B cell (primary cell): ENCODE measurements at regions of chr20 and their contacts with region 1.

Region 1: DNA sequence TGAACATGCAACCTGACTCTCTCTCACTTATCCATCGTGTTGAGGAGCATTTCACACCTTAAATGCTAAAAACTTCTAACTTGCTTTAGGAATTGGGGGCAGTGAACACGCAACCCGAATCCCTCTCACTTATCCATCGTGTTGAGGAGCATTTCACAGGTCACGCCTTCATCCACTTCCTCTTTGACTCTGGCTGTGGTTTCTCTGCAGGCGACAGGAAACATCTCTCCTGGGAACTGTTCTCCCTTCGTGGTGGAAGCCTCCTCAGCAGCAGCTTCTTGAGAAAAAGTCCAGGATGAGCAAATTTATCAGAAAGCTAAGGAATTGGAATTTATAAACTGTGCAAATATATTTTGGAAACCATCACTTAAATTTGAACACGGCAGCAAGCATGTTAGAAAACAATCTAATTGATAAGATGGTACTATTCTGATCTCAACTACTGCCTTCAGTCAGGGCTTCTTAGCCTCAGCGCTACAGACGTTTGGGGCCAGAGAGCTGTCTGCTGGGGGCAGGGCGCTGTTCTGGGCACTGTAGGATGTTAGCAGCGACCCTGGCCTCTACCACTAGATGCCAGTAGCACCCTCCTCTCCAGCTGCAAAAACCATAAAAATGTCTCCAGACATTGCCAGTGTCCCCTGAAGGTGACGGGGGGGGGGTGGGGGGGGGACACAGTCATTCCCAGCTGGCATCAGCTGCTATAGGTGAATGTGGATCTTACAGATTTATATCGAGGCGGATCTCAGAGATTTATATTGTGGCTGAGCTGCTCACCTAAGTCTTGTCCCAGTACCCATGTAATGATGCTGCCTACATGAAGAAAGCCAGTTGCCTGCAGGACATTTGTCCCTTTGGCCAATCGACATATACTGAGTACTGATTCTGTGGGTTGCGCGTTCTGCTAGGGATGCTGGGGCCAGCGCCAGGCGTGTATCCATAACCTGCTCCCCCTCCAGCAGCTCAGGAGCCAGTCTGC is 26.2 kb downstream of the CTCFL start:
- DNase-seq: peak; percentile 67
- ATAC-seq: peak; percentile 70
- H3K4me3 ChIP-seq: no peak overlapping the region
- H3K4me3 Mint-ChIP-seq: no peak overlapping the region
- H3K27ac ChIP-seq: no peak overlapping the region
- H3K27ac Mint-ChIP-seq: no peak overlapping the region
- H3K4me1 ChIP-seq: peaks cover 30 to 39% of the 10 kb centered on the region in 2 donors
- H3K4me1 Mint-ChIP-seq: peaks cover 44% of the 10 kb centered on the region
- H3K27me3 ChIP-seq: peaks cover 0 to 3% (median 0%) of the 10 kb centered on the region in 4 experiments
- H3K27me3 Mint-ChIP-seq: peaks cover 9% of the 10 kb centered on the region
- CTCF ChIP-seq: peak; percentile 70

Region 2: DNA sequence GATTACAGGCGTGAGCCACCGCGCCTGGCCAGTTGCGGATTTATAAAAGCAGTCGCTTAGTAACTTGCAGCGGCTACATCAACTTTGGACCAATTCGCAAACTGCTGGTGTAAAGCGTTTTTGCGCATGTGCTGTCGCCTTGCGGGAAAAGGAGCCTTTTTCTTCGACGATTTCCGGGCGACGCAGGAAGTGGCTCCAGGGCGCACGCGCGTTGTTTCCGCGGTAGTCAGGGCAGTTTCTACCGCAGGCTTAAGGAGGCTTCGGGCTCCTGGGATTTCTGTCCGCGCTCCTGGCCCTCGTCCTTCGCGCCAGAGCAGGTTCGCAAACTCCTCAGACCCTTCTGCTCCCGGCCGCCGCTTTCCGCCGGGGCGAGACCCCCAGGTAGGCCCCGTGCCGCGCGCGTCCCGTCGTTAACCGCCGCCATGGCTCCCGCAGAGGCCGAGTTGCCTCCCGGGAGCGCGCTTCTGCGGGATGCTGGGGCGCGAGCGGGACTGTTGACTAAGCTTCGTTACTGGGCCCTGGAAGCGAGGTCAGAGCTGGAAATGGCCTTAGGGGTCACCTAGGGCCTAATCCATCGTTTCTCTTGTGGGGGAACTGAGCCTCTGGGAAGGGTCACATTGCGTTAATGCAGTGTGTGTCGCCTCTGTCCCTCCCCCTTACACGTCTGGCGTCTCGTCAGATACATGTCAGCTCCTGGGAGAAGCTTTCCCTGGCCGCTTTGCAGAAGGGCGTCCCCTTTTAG is 147.5 kb before region 1 on chr20 and contains the start of gene RAE1:
- CTCF ChIA-PET with region 1: interaction called, 12 read pairs
- POLR2A ChIA-PET with region 1: no interaction called
- intact Hi-C with region 1: no loop called
- DNase-seq: peak; percentile 94
- ATAC-seq: peak; percentile 84
- H3K4me3 ChIP-seq: peak within 1 kb of the TSS; percentile 68 to 99 (median 89)
- H3K4me3 Mint-ChIP-seq: peak within 1 kb of the TSS; percentile 92
- H3K27ac ChIP-seq: peak within 1 kb of the TSS; percentile 58 to 81
- H3K27ac Mint-ChIP-seq: peak within 1 kb of the TSS; percentile 92
- H3K4me1 ChIP-seq: peaks cover 9 to 18% of the 10 kb centered on the region in 2 donors
- H3K4me1 Mint-ChIP-seq: peaks cover 22% of the 10 kb centered on the region
- H3K27me3 ChIP-seq: no peaks in the 10 kb centered on the region
- H3K27me3 Mint-ChIP-seq: no peaks in the 10 kb centered on the region
- CTCF ChIP-seq: no peak
- total RNA-seq, gene RAE1: 32.6 and 36.4 TPM in 2 replicates

Region 3: GRCh38 chr20:57391074-57391554 is 107.6 kb before region 1 on chr20 and contains the start of gene RBM38:
- CTCF ChIA-PET with region 1: interaction called, 27 read pairs
- POLR2A ChIA-PET with region 1: interaction called, 6 read pairs
- intact Hi-C with region 1: no loop called
- DNase-seq: peak; percentile 91
- ATAC-seq: peak; percentile 66
- H3K4me3 ChIP-seq: peak within 1 kb of the TSS; percentile 82 to 99 (median 91)
- H3K4me3 Mint-ChIP-seq: peak within 1 kb of the TSS; percentile 98
- H3K27ac ChIP-seq: peak within 1 kb of the TSS; percentile 96 to 98
- H3K27ac Mint-ChIP-seq: peak within 1 kb of the TSS; percentile 98
- H3K4me1 ChIP-seq: peaks cover 54 to 66% of the 10 kb centered on the region in 2 donors
- H3K4me1 Mint-ChIP-seq: peaks cover 51% of the 10 kb centered on the region
- H3K27me3 ChIP-seq: no peaks in the 10 kb centered on the region
- H3K27me3 Mint-ChIP-seq: no peaks in the 10 kb centered on the region
- CTCF ChIP-seq: no peak
- total RNA-seq, gene RBM38: 224 and 225 TPM in 2 replicates

Region 4: DNA sequence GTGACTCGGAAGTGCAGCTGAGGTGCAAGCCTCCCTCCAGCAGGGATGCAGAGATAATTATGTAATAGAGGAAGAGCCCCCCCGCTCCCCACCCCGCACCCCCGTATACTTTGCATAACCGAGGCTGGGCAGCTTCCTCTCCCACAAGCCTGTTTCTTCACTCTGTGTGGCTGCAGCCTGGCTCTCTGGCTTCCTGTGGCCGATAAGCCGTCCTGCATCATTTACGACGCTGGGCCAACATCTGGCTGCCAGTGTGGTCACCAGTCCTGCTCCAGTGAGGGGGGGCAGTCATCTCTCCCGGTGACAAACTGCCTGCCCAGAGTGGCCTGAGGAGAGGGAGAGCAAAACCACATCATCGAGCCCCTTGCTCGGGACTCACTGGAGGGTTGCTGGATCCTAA is 48.3 kb before region 1 on chr20:
- CTCF ChIA-PET with region 1: no interaction called
- POLR2A ChIA-PET with region 1: no interaction called
- intact Hi-C with region 1: loop called (anchors 2 kb)
- DNase-seq: peak; percentile 78
- ATAC-seq: peak; percentile 82
- H3K4me3 ChIP-seq: peak overlapping the region; percentile 15 to 48 (median 36)
- H3K4me3 Mint-ChIP-seq: peak overlapping the region; percentile 86
- H3K27ac ChIP-seq: peak overlapping the region; percentile 50
- H3K27ac Mint-ChIP-seq: peak overlapping the region; percentile 73
- H3K4me1 ChIP-seq: peaks cover 38 to 56% of the 10 kb centered on the region in 2 donors
- H3K4me1 Mint-ChIP-seq: peaks cover 63% of the 10 kb centered on the region
- H3K27me3 ChIP-seq: no peaks in the 10 kb centered on the region
- H3K27me3 Mint-ChIP-seq: no peaks in the 10 kb centered on the region
- CTCF ChIP-seq: no peak

Region 5: DNA sequence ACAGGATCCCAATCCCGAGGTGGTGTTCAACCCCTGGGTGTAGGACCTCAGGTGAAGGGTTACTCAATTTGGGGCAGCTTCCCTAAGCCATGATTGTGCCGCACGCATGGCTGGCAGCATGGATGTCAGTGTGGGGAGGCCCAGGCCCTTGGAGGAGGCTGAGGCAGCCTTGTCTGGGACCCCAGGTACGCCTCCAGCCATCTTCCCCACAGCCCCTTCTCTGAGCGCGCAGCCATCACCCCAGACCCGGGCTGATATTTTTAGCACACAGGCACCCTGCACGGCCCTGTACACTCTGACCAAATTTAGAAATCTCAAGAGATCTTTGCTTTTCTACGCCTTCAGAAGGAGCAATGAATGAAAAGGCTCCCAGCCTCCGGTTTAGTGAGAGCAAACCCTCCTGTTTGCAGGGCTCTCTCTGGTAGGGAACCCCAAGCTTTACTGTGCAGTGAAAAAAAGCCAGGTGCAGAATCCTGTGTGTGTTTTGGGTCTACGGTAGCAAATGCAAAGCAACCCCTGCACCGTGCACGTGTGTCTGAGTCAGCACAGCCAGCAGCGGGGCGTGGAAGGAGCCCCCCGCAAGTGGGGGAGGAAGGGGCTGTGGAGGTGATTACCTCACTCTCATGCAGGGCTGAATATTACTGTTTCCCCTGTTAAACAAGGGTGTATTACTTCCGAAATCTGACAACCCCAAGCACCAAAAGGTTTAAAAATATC is 18.1 kb before region 1 on chr20:
- CTCF ChIA-PET with region 1: interaction called, 21 read pairs
- POLR2A ChIA-PET with region 1: no interaction called
- intact Hi-C with region 1: loop called (anchors 1 kb)
- DNase-seq: peak; percentile 86
- ATAC-seq: peak; percentile 78
- H3K4me3 ChIP-seq: peak overlapping the region in 3 of 5 experiments; percentile 17 to 52 (median 25)
- H3K4me3 Mint-ChIP-seq: peak overlapping the region; percentile 83
- H3K27ac ChIP-seq: peak overlapping the region in 1 of 2 donors; percentile 66
- H3K27ac Mint-ChIP-seq: peak overlapping the region; percentile 92
- H3K4me1 ChIP-seq: peaks cover 63 to 76% of the 10 kb centered on the region in 2 donors
- H3K4me1 Mint-ChIP-seq: peaks cover 72% of the 10 kb centered on the region
- H3K27me3 ChIP-seq: no peaks in the 10 kb centered on the region
- H3K27me3 Mint-ChIP-seq: no peaks in the 10 kb centered on the region
- CTCF ChIP-seq: no peak

Region 6: GRCh38 chr20:57530327-57530981 is 31.7 kb after region 1 on chr20:
- CTCF ChIA-PET with region 1: no interaction called
- POLR2A ChIA-PET with region 1: no interaction called
- intact Hi-C with region 1: no loop called
- DNase-seq: no peak
- ATAC-seq: no peak
- H3K4me3 ChIP-seq: no peak overlapping the region
- H3K4me3 Mint-ChIP-seq: no peak overlapping the region
- H3K27ac ChIP-seq: no peak overlapping the region
- H3K27ac Mint-ChIP-seq: no peak overlapping the region
- H3K4me1 ChIP-seq: no peaks in the 10 kb centered on the region
- H3K4me1 Mint-ChIP-seq: no peaks in the 10 kb centered on the region
- H3K27me3 ChIP-seq: peaks cover 0 to 4% (median 0%) of the 10 kb centered on the region in 4 experiments
- H3K27me3 Mint-ChIP-seq: peaks cover 23% of the 10 kb centered on the region
- CTCF ChIP-seq: no peak

Region 7: DNA sequence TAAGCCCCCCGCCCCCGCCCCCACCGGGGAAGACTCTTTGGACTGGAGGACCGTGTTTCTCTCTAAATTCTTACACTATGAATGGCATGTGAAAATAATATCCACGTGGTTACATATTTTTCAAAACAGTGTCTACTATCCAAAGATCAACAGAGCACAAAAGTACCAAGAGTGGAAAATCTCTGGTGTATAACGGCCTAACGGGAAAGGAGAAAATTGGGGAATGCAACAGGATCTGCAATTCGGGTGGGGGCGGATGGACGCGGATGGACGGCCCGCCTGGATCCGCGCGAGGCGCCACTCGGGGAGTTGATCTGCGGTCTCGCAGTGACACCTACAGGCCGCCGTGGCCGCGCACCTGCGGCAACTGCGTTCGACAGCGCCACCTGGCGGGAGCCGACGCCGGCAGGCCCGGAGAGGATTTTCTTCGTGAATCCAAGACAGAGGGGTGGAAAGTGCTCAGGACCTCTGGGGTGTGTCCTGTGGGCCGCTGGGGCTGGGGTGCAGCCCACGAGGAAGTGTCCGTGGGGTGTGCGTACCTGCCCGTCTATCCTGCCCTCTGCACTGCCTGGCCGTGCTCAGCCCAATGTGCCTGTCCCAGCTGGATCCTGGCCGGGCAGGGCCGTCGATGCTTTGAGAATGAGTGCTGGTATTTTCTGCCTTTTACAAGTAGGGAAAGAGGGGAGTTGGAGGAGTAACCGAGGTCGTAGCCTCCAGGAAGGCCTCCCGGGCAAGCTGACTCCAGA is 711.1 kb after region 1 on chr20:
- CTCF ChIA-PET with region 1: interaction called, 4 read pairs
- POLR2A ChIA-PET with region 1: no interaction called
- intact Hi-C with region 1: loop called (anchors 2 kb)
- DNase-seq: peak; percentile 88
- ATAC-seq: peak; percentile 89
- H3K4me3 ChIP-seq: no peak overlapping the region
- H3K4me3 Mint-ChIP-seq: peak overlapping the region; percentile 14
- H3K27ac ChIP-seq: no peak overlapping the region
- H3K27ac Mint-ChIP-seq: no peak overlapping the region
- H3K4me1 ChIP-seq: peaks cover 0 to 6% of the 10 kb centered on the region in 2 donors
- H3K4me1 Mint-ChIP-seq: peaks cover 3% of the 10 kb centered on the region
- H3K27me3 ChIP-seq: peaks cover 0 to 8% (median 2%) of the 10 kb centered on the region in 4 experiments
- H3K27me3 Mint-ChIP-seq: peaks cover 14% of the 10 kb centered on the region
- CTCF ChIP-seq: peak; percentile 100